Activated naive CD4-positive, alpha-beta T cell treated with anti-CD3 and anti-CD28 coated beads for 36 hours (primary cell): ENCODE measurements at regions of chr22 and their contacts with region 1.

Region 1: DNA sequence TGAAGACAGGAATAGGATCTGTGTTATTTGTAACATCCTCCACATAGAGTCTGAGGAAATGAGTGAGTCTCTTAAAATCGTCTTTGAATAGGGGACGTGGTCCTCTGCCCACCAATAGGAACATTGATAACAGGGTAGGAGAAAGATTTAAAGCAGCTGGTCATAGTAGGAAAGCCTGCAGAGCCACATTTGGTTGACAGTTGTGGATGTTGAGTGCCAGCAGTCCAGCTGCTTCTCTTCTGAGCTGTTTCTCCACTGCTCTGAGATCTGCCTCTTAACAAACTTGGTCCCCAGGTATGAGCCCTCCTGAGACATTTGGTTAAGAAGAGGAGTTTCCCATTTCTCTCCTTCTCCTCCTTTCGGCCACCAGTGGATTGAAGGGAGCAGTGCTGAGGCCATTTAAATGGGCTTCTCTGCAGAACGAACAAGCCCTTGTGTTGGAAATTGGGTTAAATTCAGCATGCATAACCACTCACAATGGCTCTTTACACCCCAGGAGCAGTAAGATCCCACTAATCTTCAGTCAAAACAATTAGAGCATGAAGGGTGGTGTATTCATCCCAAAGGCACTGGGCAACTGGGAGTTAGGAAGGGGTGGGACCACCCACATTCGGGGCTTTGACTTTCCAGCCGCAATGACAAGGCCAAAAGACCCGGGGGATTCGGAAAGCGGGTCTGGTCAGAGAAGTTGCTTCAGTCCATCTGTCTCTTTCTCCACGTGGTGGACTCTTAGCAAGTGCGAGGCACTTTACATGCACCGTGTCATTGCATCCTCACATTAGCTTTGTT is 32.3 kb downstream of the MIAT start:
- DNase-seq: no peak
- H3K4me3 Mint-ChIP-seq: no peak overlapping the region
- H3K27ac Mint-ChIP-seq: no peak overlapping the region
- H3K4me1 Mint-ChIP-seq: peaks cover 47% of the 10 kb centered on the region
- H3K27me3 Mint-ChIP-seq: no peaks in the 10 kb centered on the region

Region 2: DNA sequence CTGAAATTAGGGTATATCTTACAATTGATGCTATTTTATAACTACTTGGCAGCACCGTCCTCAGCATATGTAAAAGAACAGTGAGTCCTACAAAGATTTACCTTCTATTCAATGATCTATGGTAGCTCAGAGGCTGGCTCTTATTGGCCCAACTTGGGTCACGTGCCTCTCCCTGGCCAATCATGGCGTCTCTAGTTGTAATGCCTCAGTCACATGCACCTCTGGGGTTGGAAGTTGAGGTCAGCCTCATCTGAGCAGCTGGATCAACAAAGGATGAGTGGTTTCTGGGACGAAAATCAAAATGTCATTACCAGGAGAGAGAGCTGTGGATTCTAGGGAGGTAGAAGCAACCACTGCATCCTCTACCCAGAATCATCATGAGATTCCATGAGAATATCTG is 283.6 kb before region 1 on chr22:
- CTCF ChIA-PET with region 1: no interaction called
- intact Hi-C with region 1: no loop called
- DNase-seq: no peak
- H3K4me3 Mint-ChIP-seq: no peak overlapping the region
- H3K27ac Mint-ChIP-seq: no peak overlapping the region
- H3K4me1 Mint-ChIP-seq: peaks cover 5% of the 10 kb centered on the region
- H3K27me3 Mint-ChIP-seq: peaks cover 4% of the 10 kb centered on the region

Region 3: DNA sequence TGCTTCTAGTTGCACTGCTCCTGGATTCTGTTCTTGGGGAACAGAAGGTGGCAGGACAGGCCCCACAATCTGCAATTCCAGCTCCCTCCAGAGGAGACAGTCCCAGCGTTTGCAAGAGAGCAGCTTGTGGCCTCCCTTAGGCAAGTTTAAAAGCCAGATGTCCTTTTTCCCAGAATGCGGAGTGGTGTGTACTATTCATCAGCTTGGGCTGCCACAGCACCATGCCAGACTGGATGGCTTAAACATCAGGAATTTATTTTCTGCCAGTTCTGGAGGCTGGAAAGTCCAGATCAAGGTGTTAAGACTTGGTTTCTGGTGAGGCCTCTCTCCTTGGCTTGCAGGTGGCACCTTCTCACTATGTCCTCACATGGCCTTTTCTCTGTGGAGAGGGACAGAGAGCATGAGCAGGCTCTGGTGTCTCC is 20.6 kb before region 1 on chr22:
- CTCF ChIA-PET with region 1: no interaction called
- intact Hi-C with region 1: no loop called
- DNase-seq: peak; percentile 24
- H3K4me3 Mint-ChIP-seq: no peak overlapping the region
- H3K27ac Mint-ChIP-seq: peak overlapping the region; percentile 56
- H3K4me1 Mint-ChIP-seq: peaks cover 62% of the 10 kb centered on the region
- H3K27me3 Mint-ChIP-seq: no peaks in the 10 kb centered on the region

Region 4: DNA sequence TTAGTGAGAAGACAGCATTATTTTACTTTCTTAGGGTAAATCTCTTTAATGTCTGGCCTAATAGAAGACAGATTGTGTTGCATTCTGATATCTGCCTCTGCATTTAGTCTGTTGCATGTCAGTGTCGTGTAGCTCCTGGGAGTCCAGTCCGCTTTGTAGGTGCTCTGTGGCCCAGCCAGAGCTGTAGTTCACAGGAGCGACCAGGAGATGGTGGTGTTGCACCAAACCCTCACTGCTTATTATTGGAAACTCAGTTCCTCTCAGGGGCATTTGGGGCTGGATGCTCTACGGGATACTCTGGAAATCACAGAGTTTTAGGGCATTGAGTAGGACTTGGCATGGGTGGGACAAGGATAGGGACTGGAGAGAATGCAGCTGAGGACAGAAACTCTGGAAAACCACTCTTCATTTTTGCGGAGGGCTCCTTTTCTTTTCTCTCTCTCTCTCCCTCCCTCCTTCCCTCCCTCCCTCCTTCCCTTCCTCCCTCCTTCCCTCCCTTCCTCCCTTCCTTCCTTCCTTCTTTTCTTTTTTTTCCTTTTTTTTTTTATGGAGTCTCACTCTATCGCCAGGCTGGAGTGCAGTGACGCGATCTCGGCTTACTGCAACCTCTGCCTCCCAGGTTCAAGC is 10.6 kb before region 1 on chr22:
- CTCF ChIA-PET with region 1: interaction called, 14 read pairs
- intact Hi-C with region 1: no loop called
- DNase-seq: peak; percentile 87
- H3K4me3 Mint-ChIP-seq: no peak overlapping the region
- H3K27ac Mint-ChIP-seq: no peak overlapping the region
- H3K4me1 Mint-ChIP-seq: peaks cover 58% of the 10 kb centered on the region
- H3K27me3 Mint-ChIP-seq: no peaks in the 10 kb centered on the region